Activated CD4-positive, alpha-beta T cell treated with anti-CD3 and anti-CD28 coated beads for 36 hours (primary cell): ENCODE measurements at regions of chr5 and their contacts with region 1.

Region 1: GRCh38 chr5:102583276-102584124 is 84.7 kb upstream of the SLCO6A1 start:
- DNase-seq: no peak
- ATAC-seq: no peak
- H3K4me3 Mint-ChIP-seq: no peak overlapping the region
- H3K27ac Mint-ChIP-seq: no peak overlapping the region
- H3K4me1 Mint-ChIP-seq: no peaks in the 10 kb centered on the region
- H3K27me3 Mint-ChIP-seq: peaks cover 2% of the 10 kb centered on the region

Region 2: DNA sequence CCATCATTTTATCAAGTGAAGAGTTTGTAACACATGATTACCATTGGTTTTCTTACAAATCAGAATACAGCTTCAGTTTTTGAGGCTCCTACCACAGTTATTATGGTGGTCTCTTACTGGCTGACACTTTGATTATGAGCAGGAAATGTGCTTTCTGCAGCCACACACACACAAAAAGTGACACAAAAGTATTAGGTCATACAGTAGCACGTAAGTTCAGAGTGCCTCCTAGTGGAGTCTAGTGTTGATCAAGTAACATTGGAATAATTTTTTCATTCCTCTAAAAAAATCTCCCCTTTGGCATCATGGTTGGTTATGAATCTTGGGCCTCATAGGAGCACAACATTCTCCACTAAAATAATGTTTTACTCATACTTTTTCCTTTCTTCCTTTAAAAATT is 209.2 kb after region 1 on chr5:
- CTCF ChIA-PET with region 1: interaction called, 3 read pairs
- POLR2A ChIA-PET with region 1: no interaction called
- intact Hi-C with region 1: loop called in 1 of 2 experiments (anchors 5 kb)
- DNase-seq: no peak
- ATAC-seq: peak; percentile 55
- H3K4me3 Mint-ChIP-seq: no peak overlapping the region
- H3K27ac Mint-ChIP-seq: no peak overlapping the region
- H3K4me1 Mint-ChIP-seq: peaks cover 6% of the 10 kb centered on the region
- H3K27me3 Mint-ChIP-seq: no peaks in the 10 kb centered on the region

Region 3: DNA sequence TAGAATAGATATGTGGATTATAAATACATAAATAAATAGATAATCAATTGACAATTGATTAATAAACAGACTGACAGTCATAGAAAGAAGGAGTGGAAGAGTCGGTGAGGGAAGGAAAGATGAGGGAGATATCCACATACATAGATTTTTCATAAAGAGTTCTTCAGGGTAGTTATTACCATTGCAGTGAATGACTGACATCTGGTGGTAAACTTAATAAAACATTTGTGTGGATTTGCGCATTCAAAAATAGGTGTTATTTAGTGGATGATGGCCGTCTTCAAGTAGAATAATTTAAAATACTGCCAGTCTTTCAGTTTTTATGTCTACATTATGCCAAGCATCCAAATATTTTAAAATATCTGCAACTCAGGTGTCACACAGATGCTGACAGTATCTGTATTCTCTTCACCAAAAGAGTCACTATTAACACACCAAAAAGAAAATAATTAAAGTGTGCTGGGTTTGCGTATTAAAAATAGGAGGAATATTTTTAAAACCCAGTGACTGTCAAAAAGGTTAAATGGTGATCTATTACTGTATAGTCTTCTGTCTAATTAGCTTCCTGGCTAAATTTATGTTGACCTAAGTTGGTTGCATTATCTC is 457.7 kb after region 1 on chr5:
- CTCF ChIA-PET with region 1: interaction called, 3 read pairs
- POLR2A ChIA-PET with region 1: no interaction called
- intact Hi-C with region 1: loop called (anchors 1 to 2 kb)
- DNase-seq: no peak
- ATAC-seq: no peak
- H3K4me3 Mint-ChIP-seq: no peak overlapping the region
- H3K27ac Mint-ChIP-seq: no peak overlapping the region
- H3K4me1 Mint-ChIP-seq: no peaks in the 10 kb centered on the region
- H3K27me3 Mint-ChIP-seq: no peaks in the 10 kb centered on the region